Activated CD8-positive, alpha-beta T cell treated with anti-CD3 and anti-CD28 coated beads for 36 hours (primary cell): ENCODE measurements at regions of chr15 and their contacts with region 1.

Region 1: DNA sequence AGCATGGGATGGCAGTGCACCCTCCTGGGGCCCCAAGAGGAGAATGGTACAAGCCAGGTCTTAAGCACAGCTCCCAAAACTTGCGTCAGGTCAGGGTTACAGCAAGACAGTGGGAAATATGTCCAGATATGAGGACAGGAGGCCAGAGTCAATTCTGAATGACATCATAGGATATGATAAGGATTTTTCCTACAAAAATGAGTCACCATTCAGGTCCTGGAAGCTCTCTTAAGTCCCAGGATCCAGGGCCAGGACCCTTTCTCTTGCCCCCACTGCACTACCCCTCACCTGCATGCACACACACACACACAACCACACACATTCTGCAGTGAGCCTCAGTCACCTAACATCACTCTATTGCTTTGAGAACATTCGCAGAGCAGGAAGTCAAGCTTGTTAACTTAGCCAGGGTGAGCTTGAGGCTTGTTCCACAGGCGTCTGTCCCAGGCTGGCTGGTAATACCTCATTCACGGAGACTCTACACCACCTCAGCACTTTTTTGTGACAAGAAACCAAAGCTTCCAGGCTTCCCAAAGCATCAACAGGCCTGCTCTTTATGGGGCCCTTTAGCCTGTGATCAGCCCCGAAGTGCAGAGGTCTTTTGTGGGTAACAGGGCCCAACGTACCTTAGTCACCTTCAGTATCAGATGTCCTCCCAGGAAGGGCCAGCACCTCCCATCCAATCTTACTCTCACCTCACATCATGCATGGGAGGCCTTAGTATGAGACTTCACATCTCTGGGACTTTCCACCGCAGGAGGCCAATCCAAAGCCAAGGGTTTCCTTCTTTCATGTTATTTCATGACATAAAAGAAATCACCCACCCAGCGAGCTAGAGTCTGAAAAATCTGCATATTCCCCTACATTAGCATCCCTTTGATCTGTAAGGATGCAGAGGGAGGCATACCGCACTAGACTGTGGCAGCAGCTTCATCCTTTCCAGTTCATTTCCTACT is 74.0 kb upstream of the LIPC start:
- DNase-seq: peak; percentile 79
- ATAC-seq: peak; percentile 90
- H3K4me3 Mint-ChIP-seq: peak overlapping the region; percentile 36
- H3K27ac Mint-ChIP-seq: peak overlapping the region; percentile 90
- H3K4me1 Mint-ChIP-seq: peaks cover 47% of the 10 kb centered on the region
- H3K27me3 Mint-ChIP-seq: no peaks in the 10 kb centered on the region
- CTCF ChIP-seq: no peak

Region 2: GRCh38 chr15:58378254-58379085 is 20.7 kb after region 1 on chr15:
- CTCF ChIA-PET with region 1: interaction called, 5 read pairs
- POLR2A ChIA-PET with region 1: interaction called, 3 read pairs
- intact Hi-C with region 1: loop called (anchors 1 kb)
- DNase-seq: no peak
- ATAC-seq: no peak
- H3K4me3 Mint-ChIP-seq: no peak overlapping the region
- H3K27ac Mint-ChIP-seq: no peak overlapping the region
- H3K4me1 Mint-ChIP-seq: peaks cover 6% of the 10 kb centered on the region
- H3K27me3 Mint-ChIP-seq: peaks cover 1% of the 10 kb centered on the region
- CTCF ChIP-seq: no peak

Region 3: GRCh38 chr15:58459560-58459959 is 101.8 kb after region 1 on chr15:
- CTCF ChIA-PET with region 1: no interaction called
- POLR2A ChIA-PET with region 1: no interaction called
- intact Hi-C with region 1: no loop called
- DNase-seq: no peak
- ATAC-seq: no peak
- H3K4me3 Mint-ChIP-seq: no peak overlapping the region
- H3K27ac Mint-ChIP-seq: peak overlapping the region; percentile 51
- H3K4me1 Mint-ChIP-seq: peaks cover 82% of the 10 kb centered on the region
- H3K27me3 Mint-ChIP-seq: no peaks in the 10 kb centered on the region
- CTCF ChIP-seq: no peak